ENCODE measurements at regions of chr10 and their contacts with region 1.

Region 1: DNA sequence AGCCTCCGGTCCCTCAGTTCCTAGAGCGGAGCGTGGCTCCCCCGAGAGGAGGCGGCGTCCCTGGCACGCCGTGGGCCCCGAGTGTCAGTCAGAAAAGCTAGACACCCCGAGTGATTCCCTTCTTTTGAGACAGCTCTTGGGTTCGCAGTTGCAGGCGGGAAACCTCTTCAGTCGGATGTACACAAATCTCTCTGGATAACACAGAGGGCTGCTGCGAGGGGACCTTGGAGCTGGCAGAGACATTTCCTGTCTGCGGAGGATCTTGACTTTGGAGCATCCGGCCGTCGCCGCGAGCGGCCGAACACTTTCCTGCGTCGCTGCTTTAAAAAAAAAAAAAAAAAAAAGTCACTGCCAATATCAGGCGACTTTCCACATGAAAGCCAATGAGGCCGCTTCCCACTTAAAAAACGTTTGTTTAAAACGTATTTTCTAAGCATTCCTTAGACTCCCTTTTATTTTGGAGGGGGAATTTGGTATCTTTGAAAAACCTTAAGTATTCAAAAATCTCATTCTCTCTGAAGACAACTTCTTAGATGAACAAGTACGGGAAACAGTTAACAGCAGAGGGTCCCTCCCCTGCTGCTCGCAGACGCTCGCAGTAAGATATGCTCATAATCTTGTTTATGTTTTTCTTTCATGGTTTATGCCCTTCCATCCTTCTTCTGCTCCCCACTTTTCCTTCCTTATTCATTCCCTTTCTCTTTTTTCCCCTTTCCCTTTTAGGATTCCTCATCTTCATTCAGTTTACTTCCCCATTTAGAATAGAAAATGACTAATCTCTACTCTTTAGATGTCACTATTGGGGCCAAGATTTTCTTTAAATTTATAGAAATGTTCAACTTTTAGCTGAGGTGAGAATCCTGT is 10.0 kb downstream of the HHEX start:
- DNase-seq: peak; percentile 94
- H3K4me3 ChIP-seq: peak overlapping the region; percentile 51
- H3K27ac ChIP-seq: peak overlapping the region; percentile 75
- H3K4me1 ChIP-seq: peaks cover 6% of the 10 kb centered on the region
- H3K27me3 ChIP-seq: no peaks in the 10 kb centered on the region
- CTCF ChIP-seq: no peak

Region 2: GRCh38 chr10:92822060-92822634 is 122.4 kb after region 1 on chr10:
- CTCF ChIA-PET with region 1: no interaction called
- POLR2A ChIA-PET with region 1: no interaction called
- intact Hi-C with region 1: loop called (anchors 5 kb)
- DNase-seq: peak; percentile 85
- H3K4me3 ChIP-seq: no peak overlapping the region
- H3K27ac ChIP-seq: peak overlapping the region; percentile 83
- H3K4me1 ChIP-seq: peaks cover 17% of the 10 kb centered on the region
- H3K27me3 ChIP-seq: no peaks in the 10 kb centered on the region
- CTCF ChIP-seq: no peak

Region 3: DNA sequence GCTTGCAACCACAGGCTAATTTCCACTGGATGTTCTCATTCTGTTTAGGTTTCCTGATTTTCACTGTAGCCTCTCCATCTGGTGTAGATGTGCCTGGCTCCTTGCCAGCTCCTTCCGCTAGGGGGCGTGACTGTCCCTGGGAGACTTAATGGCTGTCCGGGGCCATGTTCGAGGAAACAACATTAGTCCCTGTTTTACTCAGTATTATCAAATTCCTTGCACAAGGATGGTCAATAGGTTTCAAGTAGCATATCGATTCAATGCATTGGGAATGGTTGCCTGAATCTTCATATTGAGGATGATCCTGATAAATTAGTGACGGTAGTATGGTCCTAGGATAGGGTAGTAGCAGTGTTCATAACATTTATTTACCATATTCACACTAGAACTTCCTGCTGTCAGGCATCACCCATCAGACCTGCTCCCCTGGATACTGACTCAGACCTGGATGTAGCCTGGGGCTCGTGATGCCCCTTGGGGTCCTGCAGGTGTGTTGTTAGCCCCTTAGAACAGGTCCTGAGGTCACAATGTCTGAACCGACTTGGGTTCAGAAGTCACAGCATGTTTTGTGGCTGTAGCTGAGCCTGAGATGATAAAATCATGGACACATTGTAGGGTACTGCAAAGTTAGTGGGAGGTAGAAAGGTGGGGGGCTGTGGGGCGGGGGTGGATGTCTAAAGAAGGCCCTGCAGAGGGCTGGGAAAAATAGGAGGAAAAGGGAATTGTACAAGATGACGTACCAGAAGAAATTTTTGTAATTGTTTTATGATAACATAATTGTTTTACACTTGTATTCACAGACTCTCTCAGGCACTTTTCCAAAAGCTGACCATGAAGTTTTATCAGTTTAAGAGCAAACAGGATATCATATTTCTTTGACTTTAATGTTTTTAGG is 139.7 kb after region 1 on chr10:
- CTCF ChIA-PET with region 1: no interaction called
- POLR2A ChIA-PET with region 1: no interaction called
- intact Hi-C with region 1: no loop called
- DNase-seq: peak; percentile 86
- H3K4me3 ChIP-seq: no peak overlapping the region
- H3K27ac ChIP-seq: no peak overlapping the region
- H3K4me1 ChIP-seq: peaks cover 8% of the 10 kb centered on the region
- H3K27me3 ChIP-seq: no peaks in the 10 kb centered on the region
- CTCF ChIP-seq: peak; percentile 70

Region 4: GRCh38 chr10:92880233-92880861 is 180.6 kb after region 1 on chr10:
- CTCF ChIA-PET with region 1: no interaction called
- POLR2A ChIA-PET with region 1: no interaction called
- intact Hi-C with region 1: no loop called
- DNase-seq: peak; percentile 78
- H3K4me3 ChIP-seq: no peak overlapping the region
- H3K27ac ChIP-seq: no peak overlapping the region
- H3K4me1 ChIP-seq: peaks cover 21% of the 10 kb centered on the region
- H3K27me3 ChIP-seq: no peaks in the 10 kb centered on the region
- CTCF ChIP-seq: peak; percentile 71